ENCODE measurements at regions of chr2 and their contacts with region 1.

Region 1: GRCh38 chr2:207746131-207746530 is 23.6 kb downstream of the FZD5 start:
- DNase-seq: peak; percentile 33 to 74 (median 59)
- ATAC-seq: peak; percentile 80 to 83
- H3K4me3 ChIP-seq: no peak overlapping the region
- H3K27ac ChIP-seq: no peak overlapping the region
- H3K4me1 ChIP-seq: no peaks in the 10 kb centered on the region
- H3K27me3 ChIP-seq: no peaks in the 10 kb centered on the region

Region 2: GRCh38 chr2:207892716-207893402 is 146.7 kb after region 1 on chr2:
- intact Hi-C with region 1: no loop called
- DNase-seq: peak in 2 of 3 donors; percentile 29 to 64
- ATAC-seq: peak; percentile 37 to 44
- H3K4me3 ChIP-seq: no peak overlapping the region
- H3K27ac ChIP-seq: peak overlapping the region; percentile 26
- H3K4me1 ChIP-seq: peaks cover 6% of the 10 kb centered on the region
- H3K27me3 ChIP-seq: no peaks in the 10 kb centered on the region

Region 3: GRCh38 chr2:207974216-207974605 is 228.1 kb after region 1 on chr2:
- intact Hi-C with region 1: loop called in 1 of 4 experiments (anchors 5 kb)
- DNase-seq: no peak
- ATAC-seq: no peak
- H3K4me3 ChIP-seq: no peak overlapping the region
- H3K27ac ChIP-seq: no peak overlapping the region
- H3K4me1 ChIP-seq: no peaks in the 10 kb centered on the region
- H3K27me3 ChIP-seq: no peaks in the 10 kb centered on the region

Region 4: GRCh38 chr2:208033758-208034502 is 287.8 kb after region 1 on chr2:
- intact Hi-C with region 1: loop called in 2 of 4 experiments (anchors 5 to 10 kb)
- DNase-seq: no peak
- ATAC-seq: peak in 1 of 2 donors; percentile 29
- H3K4me3 ChIP-seq: no peak overlapping the region
- H3K27ac ChIP-seq: no peak overlapping the region
- H3K4me1 ChIP-seq: no peaks in the 10 kb centered on the region
- H3K27me3 ChIP-seq: no peaks in the 10 kb centered on the region

Region 5: GRCh38 chr2:208040199-208041171 is 294.4 kb after region 1 on chr2:
- intact Hi-C with region 1: loop called (anchors 5 to 10 kb)
- DNase-seq: peak; percentile 65 to 86 (median 83)
- ATAC-seq: peak; percentile 55 to 67
- H3K4me3 ChIP-seq: no peak overlapping the region
- H3K27ac ChIP-seq: no peak overlapping the region
- H3K4me1 ChIP-seq: no peaks in the 10 kb centered on the region
- H3K27me3 ChIP-seq: no peaks in the 10 kb centered on the region

Region 6: GRCh38 chr2:208072250-208072892 is 326.2 kb after region 1 on chr2:
- intact Hi-C with region 1: loop called in 2 of 4 experiments (anchors 5 to 10 kb)
- DNase-seq: peak; percentile 34 to 67 (median 55)
- ATAC-seq: peak; percentile 81 to 82
- H3K4me3 ChIP-seq: no peak overlapping the region
- H3K27ac ChIP-seq: no peak overlapping the region
- H3K4me1 ChIP-seq: no peaks in the 10 kb centered on the region
- H3K27me3 ChIP-seq: no peaks in the 10 kb centered on the region

Region 7: DNA sequence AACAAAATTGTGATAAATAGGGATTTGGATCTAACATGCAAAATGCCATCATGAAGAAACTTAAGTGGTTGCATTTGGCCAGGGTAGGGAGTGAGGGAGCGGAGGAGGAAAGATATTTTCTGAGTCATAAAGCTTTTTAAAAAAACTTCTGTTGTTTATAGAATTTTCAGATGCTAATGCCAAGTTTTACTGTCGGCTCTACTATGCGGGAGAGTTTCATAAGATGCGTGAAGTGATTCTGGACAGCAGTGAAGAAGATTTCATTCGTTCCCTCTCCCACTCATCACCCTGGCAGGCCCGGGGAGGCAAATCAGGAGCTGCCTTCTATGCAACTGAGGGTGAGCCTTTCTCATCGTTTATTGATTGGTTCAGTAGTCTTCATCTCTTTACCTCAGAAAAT is 604.5 kb after region 1 on chr2:
- intact Hi-C with region 1: no loop called
- DNase-seq: no peak
- ATAC-seq: no peak
- H3K4me3 ChIP-seq: no peak overlapping the region
- H3K27ac ChIP-seq: no peak overlapping the region
- H3K4me1 ChIP-seq: no peaks in the 10 kb centered on the region
- H3K27me3 ChIP-seq: no peaks in the 10 kb centered on the region

Measured in right cardiac atrium (tissue), 5 donors.